ENCODE measurements at regions of chr15 and their contacts with region 1.

Region 1: GRCh38 chr15:64571857-64572291 is 111.5 kb downstream of the ZNF609 start:
- DNase-seq: peak; percentile 41 to 93
- H3K4me3 ChIP-seq: no peak overlapping the region
- H3K27ac ChIP-seq: peak overlapping the region; percentile 68
- H3K4me1 ChIP-seq: peaks cover 19% of the 10 kb centered on the region
- H3K27me3 ChIP-seq: no peaks in the 10 kb centered on the region
- CTCF ChIP-seq: no peak

Region 2: DNA sequence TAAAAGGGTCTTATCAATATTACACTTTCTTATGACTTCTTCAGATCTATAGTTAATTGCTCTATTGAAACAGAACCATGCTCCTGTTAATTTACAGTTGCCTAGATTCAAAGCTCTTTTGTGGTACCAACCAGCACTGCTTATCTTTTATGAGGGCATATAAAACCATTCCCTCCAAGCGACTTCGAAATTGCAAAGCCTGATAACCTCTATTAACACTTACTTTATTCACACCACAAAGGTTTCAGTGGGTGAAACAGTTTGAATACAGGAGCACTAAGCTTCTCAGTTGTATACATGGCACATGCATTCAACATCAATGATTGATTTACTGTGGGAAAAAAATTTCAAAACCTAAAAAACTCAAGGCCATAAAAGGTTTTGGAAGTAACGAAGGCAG is 334.2 kb before region 1 on chr15:
- CTCF ChIA-PET with region 1: no interaction called
- POLR2A ChIA-PET with region 1: no interaction called
- intact Hi-C with region 1: no loop called
- DNase-seq: no peak
- H3K4me3 ChIP-seq: no peak overlapping the region
- H3K27ac ChIP-seq: no peak overlapping the region
- H3K4me1 ChIP-seq: peaks cover 6% of the 10 kb centered on the region
- H3K27me3 ChIP-seq: no peaks in the 10 kb centered on the region
- CTCF ChIP-seq: no peak

Region 3: GRCh38 chr15:64515196-64515595 is 56.7 kb before region 1 on chr15:
- CTCF ChIA-PET with region 1: no interaction called
- POLR2A ChIA-PET with region 1: no interaction called
- intact Hi-C with region 1: loop called (anchors 10 kb)
- DNase-seq: peak; percentile 47 to 55
- H3K4me3 ChIP-seq: no peak overlapping the region
- H3K27ac ChIP-seq: peak overlapping the region; percentile 47
- H3K4me1 ChIP-seq: peaks cover 11% of the 10 kb centered on the region
- H3K27me3 ChIP-seq: no peaks in the 10 kb centered on the region
- CTCF ChIP-seq: no peak